Breast epithelium (tissue), 4 donors: ENCODE measurements at regions of chr12 and their contacts with region 1.

Region 1: GRCh38 chr12:57520053-57520871 is at the start of gene DDIT3:
- DNase-seq: peak; percentile 100
- H3K4me3 ChIP-seq: peak within 1 kb of the TSS; percentile 84 to 97 (median 93)
- H3K27ac ChIP-seq: peak within 1 kb of the TSS; percentile 99 to 100
- H3K4me1 ChIP-seq: peaks cover 13 to 41% of the 10 kb centered on the region in 2 donors
- H3K27me3 ChIP-seq: no peaks in the 10 kb centered on the region
- CTCF ChIP-seq: no peak
- POLR2A ChIP-seq: peak; percentile 98
- total RNA-seq, gene DDIT3: 39.0 to 58.4 (median 51.2) TPM

Region 2: DNA sequence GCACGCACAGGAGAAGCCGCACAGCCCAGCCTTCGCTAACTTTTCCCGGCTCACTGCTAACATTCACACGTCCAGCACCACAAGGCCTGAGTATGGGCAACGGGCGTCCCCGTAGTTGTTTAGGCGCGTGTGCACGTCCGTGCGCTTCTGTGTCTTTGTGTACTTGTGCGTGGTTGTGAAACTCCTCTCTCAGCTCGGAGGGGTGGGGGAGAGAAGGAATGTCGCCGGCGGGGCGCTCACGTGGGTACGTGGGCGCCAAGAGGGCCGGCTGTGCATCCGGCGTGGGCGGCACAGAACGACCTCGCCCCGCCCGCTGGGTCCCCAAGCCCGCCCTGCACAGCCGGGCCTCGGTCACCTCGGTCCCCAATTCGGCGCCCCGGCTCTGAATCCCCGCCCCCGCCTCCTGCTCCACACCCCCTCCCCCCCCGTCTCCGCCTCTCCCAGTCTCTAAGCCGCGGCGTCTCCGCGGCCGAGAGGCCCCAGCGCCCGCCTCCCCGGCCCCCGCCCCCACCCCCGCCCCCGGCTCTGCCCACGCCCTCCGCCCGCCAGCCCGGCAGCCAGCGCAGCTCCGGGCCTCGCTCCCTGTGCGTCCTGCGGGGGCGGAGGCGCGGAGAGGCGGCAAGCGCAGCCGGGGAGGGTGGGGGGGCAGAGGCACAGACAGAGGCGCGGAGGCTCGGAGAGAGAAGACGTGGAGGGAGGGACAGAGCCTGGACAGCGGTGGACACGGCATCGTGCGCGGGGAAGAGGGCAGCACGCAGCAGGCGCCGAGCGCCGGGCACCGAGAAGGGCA is 431.6 kb before region 1 on chr12 and contains the start of gene NAB2:
- intact Hi-C with region 1: loop called (anchors 5 kb)
- DNase-seq: peak; percentile 93 to 97
- H3K4me3 ChIP-seq: peak within 1 kb of the TSS; percentile 67 to 93 (median 86)
- H3K27ac ChIP-seq: peak within 1 kb of the TSS; percentile 99 to 100
- H3K4me1 ChIP-seq: peaks cover 13 to 24% of the 10 kb centered on the region in 2 donors
- H3K27me3 ChIP-seq: no peaks in the 10 kb centered on the region
- CTCF ChIP-seq: no peak
- POLR2A ChIP-seq: peak; percentile 46
- total RNA-seq, gene NAB2: 9.0 to 33.2 (median 24.6) TPM

Region 3: GRCh38 chr12:58202933-58203718 is 682.9 kb after region 1 on chr12:
- intact Hi-C with region 1: no loop called
- DNase-seq: no peak
- H3K4me3 ChIP-seq: no peak overlapping the region
- H3K27ac ChIP-seq: peak overlapping the region in 1 of 2 donors; percentile 34
- H3K4me1 ChIP-seq: no peaks in the 10 kb centered on the region
- H3K27me3 ChIP-seq: no peaks in the 10 kb centered on the region
- CTCF ChIP-seq: no peak
- POLR2A ChIP-seq: no peak